Psoas muscle (tissue), 8 donors: ENCODE measurements at regions of chr2 and their contacts with region 1.

Region 1: GRCh38 chr2:189559579-189560272 is 20.9 kb downstream of the SLC40A1 start:
- DNase-seq: no peak
- ATAC-seq: peak in 1 of 4 donors; percentile 35
- H3K4me3 ChIP-seq: no peak overlapping the region
- H3K27ac ChIP-seq: no peak overlapping the region
- H3K4me1 ChIP-seq: peaks cover 29% of the 10 kb centered on the region
- H3K27me3 ChIP-seq: no peaks in the 10 kb centered on the region
- CTCF ChIP-seq: no peak

Region 2: GRCh38 chr2:189515264-189515663 is 44.5 kb before region 1 on chr2:
- intact Hi-C with region 1: no loop called
- DNase-seq: no peak
- ATAC-seq: no peak
- H3K4me3 ChIP-seq: no peak overlapping the region
- H3K27ac ChIP-seq: no peak overlapping the region
- H3K4me1 ChIP-seq: no peaks in the 10 kb centered on the region
- H3K27me3 ChIP-seq: no peaks in the 10 kb centered on the region
- CTCF ChIP-seq: no peak

Region 3: DNA sequence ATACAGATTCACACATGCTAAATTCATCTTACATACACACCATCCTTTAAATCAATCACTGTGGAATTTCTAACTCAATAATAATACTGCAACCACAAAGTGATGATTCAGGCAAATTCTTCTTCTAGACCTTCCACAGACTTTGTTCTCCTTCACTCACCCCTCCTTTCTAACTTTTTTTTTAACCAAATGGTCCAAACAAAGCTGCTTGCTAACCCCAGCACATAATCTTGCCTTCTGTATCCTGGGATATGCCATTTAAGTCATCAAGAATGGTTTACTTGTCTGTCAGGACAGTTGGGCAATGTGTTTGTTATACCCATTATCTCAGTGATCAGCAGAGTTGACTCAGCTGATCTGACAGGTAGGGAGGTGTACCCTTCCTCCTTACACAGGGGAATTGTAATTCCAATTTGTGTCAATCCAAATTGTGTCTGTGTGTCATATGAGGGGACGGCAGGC is 10.9 kb after region 1 on chr2:
- intact Hi-C with region 1: loop called in 1 of 2 experiments (anchors 2 kb)
- DNase-seq: no peak
- ATAC-seq: no peak
- H3K4me3 ChIP-seq: no peak overlapping the region
- H3K27ac ChIP-seq: no peak overlapping the region
- H3K4me1 ChIP-seq: peaks cover 24% of the 10 kb centered on the region
- H3K27me3 ChIP-seq: no peaks in the 10 kb centered on the region
- CTCF ChIP-seq: no peak